Activated CD4-positive, alpha-beta T cell treated with anti-CD3 and anti-CD28 coated beads for 36 hours (primary cell): ENCODE measurements at regions of chr9 and their contacts with region 1.

Region 1: GRCh38 chr9:68520356-68520755 is 20.3 kb downstream of the TMEM252 start:
- DNase-seq: no peak
- ATAC-seq: no peak
- H3K4me3 Mint-ChIP-seq: no peak overlapping the region
- H3K27ac Mint-ChIP-seq: no peak overlapping the region
- H3K4me1 Mint-ChIP-seq: no peaks in the 10 kb centered on the region
- H3K27me3 Mint-ChIP-seq: peaks cover 17% of the 10 kb centered on the region

Region 2: DNA sequence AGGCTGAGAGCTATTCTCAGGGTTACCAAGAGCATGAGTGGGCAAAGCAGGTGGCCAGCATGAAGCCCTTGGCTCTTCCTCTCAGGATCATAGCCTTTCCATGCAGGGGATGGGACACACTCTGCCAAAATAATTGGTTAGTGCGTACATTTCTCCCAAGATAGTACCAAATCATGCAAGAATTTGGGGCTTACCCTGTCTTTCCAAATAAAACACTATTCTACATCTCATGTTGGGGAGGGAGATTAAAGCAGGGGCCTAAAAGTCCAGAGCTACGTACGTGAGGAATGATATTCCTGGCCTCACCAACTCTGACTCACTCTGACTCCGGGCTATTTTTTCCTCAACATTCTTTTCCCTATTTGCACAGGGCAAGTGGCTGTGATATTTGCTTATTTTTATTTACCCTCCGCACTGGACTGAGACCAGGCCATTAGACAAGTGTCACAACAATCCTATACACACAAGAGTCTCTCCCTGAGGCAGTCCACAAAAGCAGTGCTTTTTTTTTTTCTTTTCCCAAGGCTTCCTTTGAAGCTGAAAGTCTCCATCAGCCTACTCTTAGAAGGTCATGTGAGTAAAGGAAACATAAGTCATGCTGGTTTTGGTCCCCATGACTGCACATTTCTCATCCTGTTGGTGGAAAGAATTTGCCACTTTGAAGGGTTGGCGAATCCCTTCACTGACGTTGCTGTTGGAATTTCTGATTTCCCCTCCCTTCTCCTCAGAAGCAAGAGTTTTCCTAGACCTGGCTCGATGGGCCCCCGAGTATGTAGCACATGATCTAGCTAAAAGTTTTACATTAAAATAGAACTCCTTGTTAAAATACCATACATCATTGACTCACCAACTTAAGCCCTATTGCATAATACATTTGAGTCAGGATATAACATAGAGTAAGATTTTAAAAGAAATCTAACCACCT is 19.6 kb before region 1 on chr9:
- CTCF ChIA-PET with region 1: no interaction called
- POLR2A ChIA-PET with region 1: no interaction called
- intact Hi-C with region 1: loop called in 1 of 2 experiments (anchors 2 kb)
- DNase-seq: no peak
- ATAC-seq: no peak
- H3K4me3 Mint-ChIP-seq: no peak overlapping the region
- H3K27ac Mint-ChIP-seq: no peak overlapping the region
- H3K4me1 Mint-ChIP-seq: no peaks in the 10 kb centered on the region
- H3K27me3 Mint-ChIP-seq: peaks cover 8% of the 10 kb centered on the region